Right lobe of liver (tissue), 6 donors: ENCODE measurements at regions of chr13 and their contacts with region 1.

Region 1: DNA sequence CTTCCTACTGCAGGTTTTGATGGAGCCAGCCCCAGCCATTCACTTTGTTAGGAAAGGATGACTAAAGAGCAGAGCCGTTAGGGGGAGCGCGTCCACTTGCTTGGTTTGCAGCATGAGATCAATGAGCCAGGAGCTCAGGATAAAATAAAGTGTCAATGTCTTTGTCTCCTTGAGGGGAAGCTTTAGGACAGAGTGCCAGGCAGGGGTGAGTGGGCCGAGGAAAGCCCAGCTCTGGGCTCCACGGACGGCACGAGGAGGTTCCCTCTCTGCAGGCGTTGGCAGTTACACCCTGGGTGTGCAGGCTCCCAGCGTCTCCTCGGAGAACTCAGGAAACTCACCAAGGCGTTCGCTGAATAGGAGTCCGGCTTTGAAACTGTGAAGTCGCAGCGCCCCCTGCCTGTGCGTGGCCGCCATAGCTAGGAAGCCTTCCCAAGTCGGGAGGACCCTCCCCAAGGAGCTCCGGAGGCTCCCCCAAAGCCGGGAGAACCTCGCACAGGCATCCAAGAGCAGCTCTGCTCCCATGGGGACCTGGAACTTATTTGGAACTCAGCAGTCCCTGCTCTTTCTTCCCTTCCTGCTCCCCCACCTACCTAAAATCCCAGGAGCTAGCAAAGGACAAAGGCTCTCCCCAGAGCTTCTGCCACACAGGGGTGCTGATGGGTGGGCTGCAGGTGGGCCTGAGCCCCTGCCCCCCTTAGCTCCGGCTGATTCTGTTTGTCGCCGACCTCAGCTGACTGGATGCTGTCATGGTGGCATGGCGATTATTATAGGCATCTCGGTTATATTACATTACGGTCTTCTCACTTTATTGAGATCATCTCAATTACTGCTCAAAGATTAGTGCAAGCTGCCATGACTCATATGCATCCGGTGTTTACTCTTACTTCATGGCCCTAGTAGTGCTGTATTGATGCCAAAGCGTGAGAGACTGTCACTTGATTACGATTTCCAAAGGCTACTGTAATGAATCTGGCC is 34.4 kb downstream of the GSX1 start:
- DNase-seq: peak; percentile 75 to 85 (median 80)
- ATAC-seq: peak; percentile 86 to 96 (median 89)
- H3K4me3 ChIP-seq: no peak overlapping the region
- H3K27ac ChIP-seq: peak overlapping the region in 1 of 3 donors; percentile 33
- H3K4me1 ChIP-seq: peaks cover 0 to 10% (median 0%) of the 10 kb centered on the region in 4 donors
- H3K27me3 ChIP-seq: peaks cover 4 to 8% of the 10 kb centered on the region in 2 donors
- CTCF ChIP-seq: peak; percentile 86 to 97 (median 93)
- POLR2A ChIP-seq: no peak

Region 2: GRCh38 chr13:27721681-27722080 is 105.0 kb before region 1 on chr13:
- intact Hi-C with region 1: no loop called
- DNase-seq: no peak
- ATAC-seq: no peak
- H3K4me3 ChIP-seq: no peak overlapping the region
- H3K27ac ChIP-seq: no peak overlapping the region
- H3K4me1 ChIP-seq: no peaks in the 10 kb centered on the region
- H3K27me3 ChIP-seq: no peaks in the 10 kb centered on the region
- CTCF ChIP-seq: no peak
- POLR2A ChIP-seq: no peak

Region 3: DNA sequence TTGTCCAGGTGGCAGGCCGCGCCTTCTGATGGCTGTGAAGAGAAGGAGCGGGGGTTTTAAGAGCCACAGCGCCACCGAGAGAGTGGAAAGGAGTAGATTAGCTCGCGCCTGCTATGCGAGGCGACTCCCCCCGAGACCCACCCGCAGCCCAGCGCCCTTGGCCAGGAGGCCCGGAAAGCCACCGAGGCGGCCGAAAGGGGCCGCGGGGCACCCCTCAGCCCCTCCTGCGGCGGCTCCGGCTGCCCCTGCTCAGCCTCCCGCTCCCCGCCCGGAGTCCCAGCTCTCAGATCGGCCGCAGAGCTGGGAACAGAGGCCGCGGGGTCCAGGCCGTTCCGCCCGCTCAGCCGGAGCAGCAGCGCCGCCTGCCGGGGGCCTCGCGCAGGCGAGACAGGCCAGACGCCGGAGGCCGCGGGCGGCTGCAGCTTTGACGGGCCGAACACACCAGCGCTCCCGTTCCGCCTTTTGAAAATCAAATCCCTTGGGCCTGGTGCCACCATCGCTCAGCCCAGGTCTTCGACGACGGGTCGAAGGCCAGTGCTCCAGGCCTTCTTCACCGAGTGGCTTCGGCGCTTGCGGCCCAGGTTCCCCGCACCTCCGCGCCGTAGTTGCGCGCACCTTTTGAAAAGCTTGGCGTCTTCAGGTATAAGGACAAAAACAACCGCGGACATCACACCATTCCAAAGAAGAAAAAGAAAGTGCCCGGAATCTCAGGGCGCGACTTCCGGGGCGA is 127.2 kb after region 1 on chr13:
- intact Hi-C with region 1: loop called in 1 of 2 experiments (anchors 5 kb)
- DNase-seq: peak; percentile 85 to 88 (median 87)
- ATAC-seq: peak; percentile 83 to 92 (median 90)
- H3K4me3 ChIP-seq: peak overlapping the region; percentile 55 to 67 (median 66)
- H3K27ac ChIP-seq: peak overlapping the region; percentile 89 to 98 (median 96)
- H3K4me1 ChIP-seq: peaks cover 0 to 11% (median 3%) of the 10 kb centered on the region in 4 donors
- H3K27me3 ChIP-seq: no peaks in the 10 kb centered on the region
- CTCF ChIP-seq: peak; percentile 91 to 98 (median 94)
- POLR2A ChIP-seq: peak; percentile 47

Region 4: GRCh38 chr13:27960362-27961226 is 133.9 kb after region 1 on chr13:
- intact Hi-C with region 1: loop called in 1 of 2 experiments (anchors 10 kb)
- DNase-seq: peak; percentile 82 to 91 (median 87)
- ATAC-seq: peak; percentile 92 to 94 (median 93)
- H3K4me3 ChIP-seq: peak overlapping the region; percentile 45 to 63 (median 60)
- H3K27ac ChIP-seq: peak overlapping the region; percentile 40 to 84 (median 80)
- H3K4me1 ChIP-seq: peaks cover 0 to under 1% (median 0%) of the 10 kb centered on the region in 4 donors
- H3K27me3 ChIP-seq: no peaks in the 10 kb centered on the region
- CTCF ChIP-seq: peak; percentile 72 to 86 (median 76)
- POLR2A ChIP-seq: peak; percentile 52